ENCODE measurements at regions of chr20 and their contacts with region 1.

Region 1: DNA sequence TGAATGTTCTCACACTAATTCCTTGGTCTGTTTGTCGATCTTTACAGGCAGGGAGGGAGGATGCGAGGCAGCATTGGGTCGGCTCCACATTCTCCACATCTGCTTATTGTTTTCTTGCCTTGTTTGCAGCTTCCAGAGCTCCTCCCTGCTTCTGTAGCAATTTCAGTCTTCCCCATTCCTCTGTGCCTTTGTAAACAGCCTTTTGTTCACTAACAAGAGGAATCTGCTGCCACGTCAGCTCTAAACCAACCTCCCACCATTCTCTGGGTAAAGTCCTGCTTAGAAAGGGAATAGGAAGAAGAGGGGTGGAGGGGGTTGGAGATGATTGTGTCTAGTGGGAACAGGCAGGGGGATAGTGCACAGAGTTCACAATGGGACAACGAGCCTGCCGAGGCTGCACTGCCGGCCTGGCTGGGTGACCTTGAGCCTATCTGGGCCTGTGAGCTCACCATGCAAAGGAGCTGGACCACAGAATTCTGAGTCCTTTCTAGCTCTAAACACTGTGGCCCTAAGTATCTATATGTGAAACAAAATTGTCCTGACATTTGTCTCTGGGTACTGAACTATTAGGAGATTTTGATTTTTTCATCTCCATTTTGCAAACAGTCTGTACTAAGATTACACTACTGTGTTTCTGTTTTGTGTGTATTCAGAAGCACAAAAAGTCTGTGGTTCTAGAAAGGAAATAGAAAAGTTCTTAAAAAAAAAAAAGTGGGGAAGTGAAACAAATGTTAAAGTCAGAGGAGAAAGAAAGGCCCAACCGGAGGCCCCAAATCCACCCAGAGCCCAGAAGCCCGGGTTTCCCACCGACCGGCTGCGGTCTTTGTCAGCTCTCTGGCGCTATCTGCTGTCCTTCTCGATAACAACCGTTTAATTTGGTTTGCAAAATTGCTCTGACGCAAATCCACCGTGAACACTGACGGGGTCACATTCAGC is 1.4 kb upstream of the PRND start:
- DNase-seq: peak; percentile 86 to 93 (median 89)
- H3K4me3 ChIP-seq: peak overlapping the region in 2 of 3 experiments; percentile 17 to 68
- H3K4me3 Mint-ChIP-seq: peak overlapping the region; percentile 49 to 83
- H3K27ac ChIP-seq: peak overlapping the region; percentile 83 to 96
- H3K27ac Mint-ChIP-seq: peak overlapping the region; percentile 89 to 97 (median 95)
- H3K4me1 ChIP-seq: peaks cover 21 to 23% of the 10 kb centered on the region in 2 donors
- H3K4me1 Mint-ChIP-seq: peaks cover 25% of the 10 kb centered on the region
- H3K27me3 ChIP-seq: no peaks in the 10 kb centered on the region
- H3K27me3 Mint-ChIP-seq: peaks cover 0 to 5% (median 2%) of the 10 kb centered on the region in 3 donors
- CTCF ChIP-seq: peak; percentile 82

Region 2: DNA sequence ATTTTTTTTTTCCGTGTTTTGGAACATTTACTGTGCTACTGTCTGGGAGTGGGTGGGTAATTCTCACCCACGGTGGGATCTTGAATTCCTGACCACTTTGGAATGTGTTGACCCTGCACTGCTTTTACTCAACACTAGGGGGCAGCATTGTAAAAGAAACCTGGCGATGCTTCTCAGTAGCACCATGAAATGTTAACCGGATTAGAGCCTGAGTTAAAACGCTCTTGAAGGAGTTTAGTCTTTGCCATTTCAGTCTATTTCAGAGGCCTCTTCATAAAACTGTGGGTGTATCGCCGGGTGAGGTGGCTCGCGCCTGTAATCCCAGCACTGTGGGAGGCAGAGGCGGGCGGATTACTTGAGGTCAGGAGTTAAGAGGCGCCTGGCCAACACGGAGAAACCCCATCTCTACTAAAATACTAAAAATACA is 113.0 kb before region 1 on chr20:
- intact Hi-C with region 1: loop called (anchors 1 to 2 kb)
- DNase-seq: peak; percentile 64 to 76 (median 71)
- H3K4me3 ChIP-seq: no peak overlapping the region
- H3K4me3 Mint-ChIP-seq: peak overlapping the region in 1 of 2 donors; percentile 54
- H3K27ac ChIP-seq: no peak overlapping the region
- H3K27ac Mint-ChIP-seq: peak overlapping the region in 2 of 7 donors; percentile 19 to 43
- H3K4me1 ChIP-seq: peaks cover 13 to 22% of the 10 kb centered on the region in 2 donors
- H3K4me1 Mint-ChIP-seq: peaks cover 21% of the 10 kb centered on the region
- H3K27me3 ChIP-seq: peaks cover 0 to 7% of the 10 kb centered on the region in 2 donors
- H3K27me3 Mint-ChIP-seq: peaks cover 4 to 13% (median 6%) of the 10 kb centered on the region in 3 donors
- CTCF ChIP-seq: peak; percentile 93

Region 3: GRCh38 chr20:4613718-4614620 is 106.3 kb before region 1 on chr20:
- intact Hi-C with region 1: loop called in 1 of 2 experiments (anchors 2 kb)
- DNase-seq: peak; percentile 35 to 68 (median 59)
- H3K4me3 ChIP-seq: peak overlapping the region in 1 of 3 experiments; percentile 26
- H3K4me3 Mint-ChIP-seq: peak overlapping the region; percentile 20 to 66
- H3K27ac ChIP-seq: no peak overlapping the region
- H3K27ac Mint-ChIP-seq: peak overlapping the region in 5 of 7 donors; percentile 51 to 85 (median 66)
- H3K4me1 ChIP-seq: peaks cover 14 to 22% of the 10 kb centered on the region in 2 donors
- H3K4me1 Mint-ChIP-seq: peaks cover 19% of the 10 kb centered on the region
- H3K27me3 ChIP-seq: no peaks in the 10 kb centered on the region
- H3K27me3 Mint-ChIP-seq: peaks cover 0 to 8% (median 5%) of the 10 kb centered on the region in 3 donors
- CTCF ChIP-seq: peak; percentile 48

Region 4: DNA sequence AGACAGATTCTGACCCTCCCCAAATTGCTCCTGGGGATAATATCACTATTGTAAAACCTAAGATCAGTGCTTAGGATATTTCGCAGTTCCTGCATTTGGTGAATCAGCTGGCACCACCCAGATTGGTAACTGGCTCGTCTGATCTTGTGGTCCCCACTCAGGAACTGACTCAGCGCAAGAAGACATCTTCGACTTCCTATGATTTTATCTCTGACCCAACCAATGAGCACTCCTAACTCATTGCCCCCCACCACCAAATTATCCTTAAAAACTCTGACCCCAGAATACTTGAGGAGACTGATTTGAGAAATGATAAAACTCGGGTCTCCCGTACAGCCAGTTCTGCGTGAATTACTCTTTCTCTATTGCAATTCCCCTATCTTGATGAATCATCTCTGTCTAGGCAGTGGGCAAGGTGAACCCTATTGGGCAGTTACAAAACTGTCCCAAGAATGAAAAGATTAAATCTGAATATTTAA is 54.3 kb before region 1 on chr20:
- intact Hi-C with region 1: loop called in 1 of 2 experiments (anchors 5 kb)
- DNase-seq: peak; percentile 88 to 97 (median 93)
- H3K4me3 ChIP-seq: peak overlapping the region; percentile 20 to 56 (median 42)
- H3K4me3 Mint-ChIP-seq: peak overlapping the region; percentile 64 to 86
- H3K27ac ChIP-seq: peak overlapping the region; percentile 84 to 93
- H3K27ac Mint-ChIP-seq: peak overlapping the region; percentile 91 to 100 (median 98)
- H3K4me1 ChIP-seq: peaks cover 47 to 48% of the 10 kb centered on the region in 2 donors
- H3K4me1 Mint-ChIP-seq: peaks cover 56% of the 10 kb centered on the region
- H3K27me3 ChIP-seq: no peaks in the 10 kb centered on the region
- H3K27me3 Mint-ChIP-seq: peaks cover 0 to 4% (median 0%) of the 10 kb centered on the region in 3 donors
- CTCF ChIP-seq: no peak

Region 5: GRCh38 chr20:4689220-4689619 is 31.1 kb before region 1 on chr20:
- intact Hi-C with region 1: loop called in 1 of 2 experiments (anchors 2 kb)
- DNase-seq: no peak
- H3K4me3 ChIP-seq: no peak overlapping the region
- H3K4me3 Mint-ChIP-seq: no peak overlapping the region
- H3K27ac ChIP-seq: no peak overlapping the region
- H3K27ac Mint-ChIP-seq: peak overlapping the region in 3 of 7 donors; percentile 2 to 73 (median 71)
- H3K4me1 ChIP-seq: peaks cover 22 to 36% of the 10 kb centered on the region in 2 donors
- H3K4me1 Mint-ChIP-seq: peaks cover 47% of the 10 kb centered on the region
- H3K27me3 ChIP-seq: no peaks in the 10 kb centered on the region
- H3K27me3 Mint-ChIP-seq: peaks cover 0 to 3% (median 0%) of the 10 kb centered on the region in 3 donors
- CTCF ChIP-seq: no peak

Region 6: GRCh38 chr20:4702562-4703280 is 17.6 kb before region 1 on chr20:
- intact Hi-C with region 1: no loop called
- DNase-seq: no peak
- H3K4me3 ChIP-seq: no peak overlapping the region
- H3K4me3 Mint-ChIP-seq: no peak overlapping the region
- H3K27ac ChIP-seq: no peak overlapping the region
- H3K27ac Mint-ChIP-seq: peak overlapping the region in 1 of 7 donors; percentile 0
- H3K4me1 ChIP-seq: no peaks in the 10 kb centered on the region
- H3K4me1 Mint-ChIP-seq: peaks cover 6% of the 10 kb centered on the region
- H3K27me3 ChIP-seq: no peaks in the 10 kb centered on the region
- H3K27me3 Mint-ChIP-seq: peaks cover 0 to 2% (median 0%) of the 10 kb centered on the region in 3 donors
- CTCF ChIP-seq: no peak

Region 7: DNA sequence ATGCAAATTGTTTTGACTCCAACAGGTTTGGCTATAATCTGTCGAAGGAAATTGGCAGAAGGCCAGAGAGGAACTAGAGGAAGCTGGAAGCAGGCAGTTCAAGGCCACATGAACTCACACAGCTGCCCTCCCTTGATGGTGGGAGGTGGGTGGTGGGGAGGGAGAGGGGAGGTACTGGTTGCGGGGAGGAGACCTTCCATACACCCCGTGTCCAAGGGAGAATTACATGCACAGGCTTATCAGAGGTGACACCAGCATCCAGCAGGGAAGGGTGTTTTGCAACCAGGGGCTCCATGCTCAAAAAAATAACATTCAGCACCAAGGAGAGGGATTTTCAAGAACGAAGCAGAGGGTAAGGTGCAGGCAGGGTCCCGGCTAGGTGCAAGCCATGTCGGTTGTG is 10.5 kb after region 1 on chr20:
- intact Hi-C with region 1: no loop called
- DNase-seq: no peak
- H3K4me3 ChIP-seq: no peak overlapping the region
- H3K4me3 Mint-ChIP-seq: no peak overlapping the region
- H3K27ac ChIP-seq: no peak overlapping the region
- H3K27ac Mint-ChIP-seq: no peak overlapping the region
- H3K4me1 ChIP-seq: peaks cover 5 to 13% of the 10 kb centered on the region in 2 donors
- H3K4me1 Mint-ChIP-seq: peaks cover 15% of the 10 kb centered on the region
- H3K27me3 ChIP-seq: peaks cover 6 to 18% of the 10 kb centered on the region in 2 donors
- H3K27me3 Mint-ChIP-seq: peaks cover 18 to 25% (median 18%) of the 10 kb centered on the region in 3 donors
- CTCF ChIP-seq: no peak

Region 8: GRCh38 chr20:4774207-4774606 is 53.9 kb after region 1 on chr20:
- intact Hi-C with region 1: no loop called
- DNase-seq: peak; percentile 78 to 90 (median 83)
- H3K4me3 ChIP-seq: no peak overlapping the region
- H3K4me3 Mint-ChIP-seq: no peak overlapping the region
- H3K27ac ChIP-seq: peak overlapping the region; percentile 37 to 68
- H3K27ac Mint-ChIP-seq: peak overlapping the region; percentile 45 to 83 (median 67)
- H3K4me1 ChIP-seq: peaks cover 23 to 25% of the 10 kb centered on the region in 2 donors
- H3K4me1 Mint-ChIP-seq: peaks cover 31% of the 10 kb centered on the region
- H3K27me3 ChIP-seq: no peaks in the 10 kb centered on the region
- H3K27me3 Mint-ChIP-seq: no peaks in the 10 kb centered on the region
- CTCF ChIP-seq: no peak

Measured in CD14-positive monocyte (primary cell).